Activated CD4-positive, alpha-beta memory T cell treated with anti-CD3 and anti-CD28 coated beads for 36 hours (primary cell): ENCODE measurements at regions of chr2 and their contacts with region 1.

Region 1: GRCh38 chr2:218286570-218287459 is 5.5 kb downstream of the TMBIM1 start:
- DNase-seq: peak; percentile 92
- H3K4me3 Mint-ChIP-seq: peak overlapping the region; percentile 82
- H3K27ac Mint-ChIP-seq: peak overlapping the region; percentile 98
- H3K4me1 Mint-ChIP-seq: peaks cover 81% of the 10 kb centered on the region
- H3K27me3 Mint-ChIP-seq: no peaks in the 10 kb centered on the region

Region 2: GRCh38 chr2:218074031-218074430 is 212.8 kb before region 1 on chr2:
- CTCF ChIA-PET with region 1: no interaction called
- POLR2A ChIA-PET with region 1: no interaction called
- intact Hi-C with region 1: no loop called
- DNase-seq: peak; percentile 48
- H3K4me3 Mint-ChIP-seq: no peak overlapping the region
- H3K27ac Mint-ChIP-seq: no peak overlapping the region
- H3K4me1 Mint-ChIP-seq: peaks cover 4% of the 10 kb centered on the region
- H3K27me3 Mint-ChIP-seq: peaks cover 5% of the 10 kb centered on the region

Region 3: GRCh38 chr2:218216674-218217359 is 70.0 kb before region 1 on chr2 and contains the start of gene ARPC2:
- CTCF ChIA-PET with region 1: no interaction called
- POLR2A ChIA-PET with region 1: interaction called, 4 read pairs
- intact Hi-C with region 1: loop called (anchors 1 kb)
- DNase-seq: peak; percentile 97
- H3K4me3 Mint-ChIP-seq: peak within 1 kb of the TSS; percentile 83
- H3K27ac Mint-ChIP-seq: peak within 1 kb of the TSS; percentile 91
- H3K4me1 Mint-ChIP-seq: peaks cover 34% of the 10 kb centered on the region
- H3K27me3 Mint-ChIP-seq: no peaks in the 10 kb centered on the region
- total RNA-seq, gene ARPC2: 564 to 570 TPM

Region 4: GRCh38 chr2:218892693-218893348 is 606.0 kb after region 1 on chr2:
- CTCF ChIA-PET with region 1: no interaction called
- POLR2A ChIA-PET with region 1: no interaction called
- intact Hi-C with region 1: loop called (anchors 10 kb)
- DNase-seq: peak; percentile 91
- H3K4me3 Mint-ChIP-seq: peak overlapping the region; percentile 77
- H3K27ac Mint-ChIP-seq: peak overlapping the region; percentile 90
- H3K4me1 Mint-ChIP-seq: peaks cover 52% of the 10 kb centered on the region
- H3K27me3 Mint-ChIP-seq: no peaks in the 10 kb centered on the region